ENCODE measurements at regions of chr20 and their contacts with region 1.

Region 1: DNA sequence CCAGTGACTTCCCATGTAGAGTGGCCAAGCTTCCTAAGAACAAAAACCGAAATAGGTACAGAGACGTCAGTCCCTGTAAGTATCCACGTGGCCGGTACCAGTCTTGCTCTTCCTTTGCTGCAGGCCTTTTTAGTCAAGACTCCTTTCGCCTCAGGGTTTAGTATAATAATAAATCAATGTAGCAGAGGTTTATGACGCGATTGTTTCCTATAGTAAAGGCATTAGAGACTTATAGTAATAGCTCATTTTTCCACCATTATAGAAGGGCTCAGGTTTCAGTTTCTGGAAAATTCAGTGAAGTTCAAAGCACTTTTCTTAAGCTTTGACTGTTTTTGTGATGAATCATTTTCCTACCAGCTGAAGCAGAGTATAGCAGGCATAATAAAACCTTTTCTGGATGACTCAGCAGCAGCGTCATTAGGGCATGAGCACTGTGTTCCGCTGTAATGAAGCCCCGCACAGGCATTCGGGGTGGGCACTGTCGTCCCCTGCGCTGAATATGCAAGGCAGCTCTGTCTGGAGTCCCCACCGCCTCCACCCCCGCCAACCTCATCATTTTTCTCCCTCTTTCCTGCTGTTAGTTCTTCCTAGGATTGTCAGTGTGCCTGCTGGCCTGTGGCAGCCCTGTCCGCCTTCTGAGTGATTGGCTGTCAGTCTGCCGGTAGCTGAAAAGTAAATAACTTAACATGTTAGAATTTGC is 51.3 kb downstream of the PTPN1 start:
- DNase-seq: peak in 1 of 2 donors; percentile 87
- H3K4me3 ChIP-seq: peak overlapping the region in 1 of 2 donors; percentile 31
- H3K27ac ChIP-seq: peak overlapping the region; percentile 74 to 86
- H3K4me1 ChIP-seq: peaks cover 10 to 25% of the 10 kb centered on the region in 2 donors
- H3K27me3 ChIP-seq: no peaks in the 10 kb centered on the region
- CTCF ChIP-seq: no peak

Region 2: GRCh38 chr20:50540620-50541605 is 20.6 kb before region 1 on chr20:
- intact Hi-C with region 1: loop called (anchors 2 kb)
- DNase-seq: peak in 1 of 2 donors; percentile 80
- H3K4me3 ChIP-seq: peak overlapping the region; percentile 24 to 28
- H3K27ac ChIP-seq: peak overlapping the region; percentile 81 to 94
- H3K4me1 ChIP-seq: peaks cover 16 to 42% of the 10 kb centered on the region in 2 donors
- H3K27me3 ChIP-seq: no peaks in the 10 kb centered on the region
- CTCF ChIP-seq: no peak

Region 3: DNA sequence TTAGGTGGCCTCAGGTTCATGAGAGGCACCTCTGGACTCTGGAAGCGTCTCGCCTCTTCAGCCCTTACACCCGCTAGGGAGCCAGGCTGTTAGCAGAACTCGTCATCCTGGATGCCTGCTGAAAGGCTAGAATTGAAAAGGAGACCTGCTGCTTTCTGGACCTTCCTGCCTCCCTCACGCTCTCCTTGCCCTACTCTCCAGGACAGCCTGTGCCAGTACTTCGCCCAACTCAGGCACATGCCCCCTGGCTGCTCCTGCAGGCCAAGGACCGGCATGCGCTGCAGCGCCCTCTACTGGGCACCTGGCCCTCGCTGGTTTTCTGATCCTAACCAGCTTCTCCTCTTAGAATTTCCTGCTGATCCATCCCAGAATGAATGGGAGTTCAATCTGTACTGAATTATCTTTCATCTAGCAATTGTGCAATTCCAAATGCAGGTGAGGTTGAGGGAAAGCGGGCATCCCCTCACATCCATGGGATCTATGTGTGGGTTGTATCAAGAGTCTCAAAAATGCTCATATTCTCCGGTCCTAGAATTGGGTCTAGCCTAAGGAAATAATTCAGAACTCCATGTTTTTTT is 26.6 kb after region 1 on chr20:
- intact Hi-C with region 1: no loop called
- DNase-seq: peak in 1 of 2 donors; percentile 82
- H3K4me3 ChIP-seq: no peak overlapping the region
- H3K27ac ChIP-seq: no peak overlapping the region
- H3K4me1 ChIP-seq: peaks cover 0 to 4% of the 10 kb centered on the region in 2 donors
- H3K27me3 ChIP-seq: no peaks in the 10 kb centered on the region
- CTCF ChIP-seq: peak; percentile 77 to 93 (median 87)

Measured in ascending aorta (tissue), 2 donors.